ENCODE measurements at regions of chr6 and their contacts with region 1.

Region 1: DNA sequence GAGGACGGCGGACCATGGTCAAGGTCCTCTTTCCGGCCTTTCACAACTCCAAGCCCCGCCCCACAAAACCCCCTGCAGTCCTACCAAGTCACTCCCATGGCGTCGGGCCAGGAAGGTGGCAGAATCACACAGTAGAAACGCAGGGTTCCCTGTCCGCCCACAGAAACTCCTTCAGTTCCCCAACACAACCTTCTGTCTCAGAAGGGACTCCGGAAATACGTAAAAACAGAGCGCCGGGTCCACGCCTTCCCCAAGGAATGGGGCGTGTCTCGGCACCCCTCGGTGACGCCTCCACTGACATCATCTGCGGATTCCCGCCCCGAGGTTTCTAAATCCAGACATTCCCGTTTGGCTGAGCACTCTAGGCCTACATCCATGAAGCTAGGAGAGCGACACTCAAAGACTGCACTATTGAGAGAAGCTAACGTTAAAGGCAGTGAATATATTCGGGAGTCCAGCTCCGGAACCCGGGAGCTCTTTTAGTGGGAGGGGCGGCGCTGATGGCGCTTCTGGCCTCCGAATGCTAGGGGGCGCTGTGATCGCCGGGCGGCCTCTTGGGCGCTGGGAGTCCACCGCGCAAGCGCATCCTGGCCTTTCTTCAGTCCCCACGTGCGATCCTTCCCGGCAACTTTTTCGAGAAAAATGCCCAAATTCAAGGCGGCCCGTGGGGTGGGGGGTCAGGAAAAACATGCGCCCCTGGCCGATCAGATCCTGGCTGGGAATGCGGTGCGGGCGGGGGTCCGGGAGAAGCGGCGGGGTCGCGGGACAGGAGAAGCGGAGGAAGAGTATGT is at the starts of genes BYSL and MED20:
- DNase-seq: peak; percentile 92

Region 2: GRCh38 chr6:41895300-41896233 is 25.5 kb before region 1 on chr6 and contains the start of gene USP49:
- CTCF ChIA-PET with region 1: interaction called, 8 read pairs
- POLR2A ChIA-PET with region 1: interaction called, 11 read pairs
- DNase-seq: peak; percentile 94

Region 3: GRCh38 chr6:41936073-41936837 is 15.1 kb after region 1 on chr6:
- CTCF ChIA-PET with region 1: interaction called, 11 read pairs
- POLR2A ChIA-PET with region 1: interaction called, 54 read pairs
- DNase-seq: peak; percentile 74

Region 4: GRCh38 chr6:41957117-41957516 is 36.0 kb after region 1 on chr6:
- CTCF ChIA-PET with region 1: no interaction called
- POLR2A ChIA-PET with region 1: no interaction called
- DNase-seq: no peak

Region 5: DNA sequence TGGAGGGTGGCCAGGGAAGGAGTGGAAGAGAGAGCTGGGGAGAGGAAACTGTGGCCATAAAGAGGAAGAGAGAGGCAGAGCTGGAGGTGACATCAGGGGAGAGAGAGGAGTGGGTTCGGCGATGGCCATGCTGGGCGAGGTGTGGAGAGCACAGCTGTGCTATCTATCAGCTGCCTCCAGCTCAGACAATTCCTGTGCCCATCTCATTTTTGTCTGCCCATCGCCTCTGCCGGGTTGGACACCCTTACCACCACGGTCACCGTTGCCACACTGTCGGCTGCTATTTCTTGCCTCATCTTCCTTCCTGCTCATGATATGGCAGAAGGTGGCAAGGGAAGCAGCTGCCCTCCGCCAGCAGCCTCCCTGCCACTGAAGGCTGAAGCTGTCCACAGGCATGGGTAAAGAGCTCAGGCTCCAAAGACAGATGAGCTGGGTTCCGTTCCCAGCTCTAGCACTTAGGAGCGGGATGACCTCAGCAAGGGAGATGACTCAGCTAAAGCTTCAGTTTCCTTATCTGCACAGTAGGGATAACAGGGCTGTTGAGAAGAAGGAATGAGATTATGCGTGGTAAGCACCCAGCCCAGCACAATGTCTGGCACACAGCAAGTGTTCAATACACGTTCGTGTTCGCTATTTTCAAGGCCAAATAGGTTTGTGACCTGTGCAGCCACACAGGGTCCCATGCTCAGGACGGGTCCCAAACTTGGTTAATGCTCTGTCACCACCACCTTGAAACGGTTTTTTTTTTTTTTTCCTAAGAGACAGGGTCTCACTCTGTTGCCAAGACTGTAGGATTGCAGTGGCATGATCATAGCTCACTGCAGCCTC is 107.3 kb after region 1 on chr6:
- CTCF ChIA-PET with region 1: interaction called, 12 read pairs
- POLR2A ChIA-PET with region 1: interaction called, 4 read pairs
- DNase-seq: peak; percentile 52

Region 6: DNA sequence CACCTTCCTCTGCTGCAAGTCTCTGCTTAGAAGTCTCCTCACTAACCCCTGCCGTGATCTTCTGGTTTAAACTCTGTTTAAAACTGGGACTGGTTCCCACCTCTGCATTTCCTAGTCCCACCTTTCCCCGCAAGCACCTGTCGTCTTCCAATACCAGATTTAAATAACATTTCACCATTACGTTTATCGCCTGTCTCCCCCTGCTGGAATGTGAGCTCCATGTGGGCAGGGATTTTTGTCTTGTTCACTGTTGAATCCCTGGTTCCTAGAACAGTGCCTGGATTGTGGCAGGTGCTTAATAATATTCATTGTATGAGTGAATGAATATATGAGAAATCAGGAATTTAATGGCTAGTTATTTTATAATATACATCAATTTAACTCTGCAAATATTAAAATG is 254.7 kb after region 1 on chr6:
- CTCF ChIA-PET with region 1: no interaction called
- POLR2A ChIA-PET with region 1: no interaction called
- DNase-seq: no peak

Measured in HEK293T (cell line).